SK-N-SH (cell line): ENCODE measurements at regions of chr7 and their contacts with region 1.

Region 1: GRCh38 chr7:29319719-29320521 is 125.3 kb downstream of the CHN2 start:
- DNase-seq: peak; percentile 73
- H3K4me3 ChIP-seq: peak overlapping the region in 1 of 2 experiments; percentile 9; a peak in 1 of 4 replicates
- H3K27ac ChIP-seq: peak overlapping the region in 1 of 2 experiments; percentile 99; a peak in 3 of 4 replicates
- H3K4me1 ChIP-seq: peaks cover 10 to 38% of the 10 kb centered on the region in 2 experiments; a peak in 3 of 4 replicates
- H3K27me3 ChIP-seq: no peaks in the 10 kb centered on the region
- CTCF ChIP-seq: no peak
- EP300 ChIP-seq: peak in 1 of 2 experiments; percentile 84; a peak in 2 of 4 replicates
- RAD21 ChIP-seq: peak; percentile 29

Region 2: DNA sequence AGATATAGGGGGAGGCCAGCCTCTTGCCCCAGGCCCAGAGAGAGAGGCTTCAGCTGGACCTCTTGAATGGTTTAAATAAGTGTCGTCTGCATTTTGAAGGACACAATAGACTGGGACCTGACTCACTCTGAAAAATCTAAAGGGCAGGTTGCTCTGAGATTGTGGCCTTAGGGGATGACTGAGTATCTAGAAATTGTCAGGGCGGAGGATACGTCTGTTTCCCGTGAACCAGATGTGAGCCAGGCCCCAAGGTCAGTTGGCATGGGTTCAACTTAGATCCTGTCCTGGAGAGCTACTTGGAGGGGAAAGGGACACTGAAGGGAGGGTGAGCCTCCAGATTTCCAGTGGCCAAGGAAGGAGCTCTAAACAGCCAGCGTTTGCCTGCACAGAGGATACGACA is 15.2 kb before region 1 on chr7:
- CTCF ChIA-PET with region 1: interaction called, 10 read pairs
- POLR2A ChIA-PET with region 1: interaction called, 9 read pairs
- DNase-seq: peak; percentile 83
- H3K4me3 ChIP-seq: no peak overlapping the region
- H3K27ac ChIP-seq: peak overlapping the region in 1 of 2 experiments; percentile 64; a peak in 2 of 4 replicates
- H3K4me1 ChIP-seq: peaks cover 0 to 18% of the 10 kb centered on the region in 2 experiments; a peak in 2 of 4 replicates
- H3K27me3 ChIP-seq: no peaks in the 10 kb centered on the region; the same call in 1 of the 2 replicates
- CTCF ChIP-seq: no peak
- EP300 ChIP-seq: peak in 1 of 2 experiments; percentile 81; a peak in 1 of 4 replicates
- RAD21 ChIP-seq: no peak